IMR-90 (cell line): ENCODE measurements at regions of chr17 and their contacts with region 1.

Region 1: GRCh38 chr17:42760652-42761581 is at the start of gene RAMP2:
- DNase-seq: no peak
- ATAC-seq: peak; percentile 78
- H3K4me3 ChIP-seq: peak within 1 kb of the TSS; percentile 34
- H3K27ac ChIP-seq: no peak within 1 kb of the TSS
- H3K4me1 ChIP-seq: no peaks in the 10 kb centered on the region
- H3K27me3 ChIP-seq: peaks cover 48% of the 10 kb centered on the region
- CTCF ChIP-seq: no peak
- POLR2A ChIP-seq: no peak
- RAD21 ChIP-seq: no peak
- total RNA-seq, gene RAMP2: 0.18 and 0.28 TPM in 2 replicates

Region 2: GRCh38 chr17:42577532-42578281 is 183.2 kb before region 1 on chr17 and contains the start of gene PSMC3IP:
- CTCF ChIA-PET with region 1: interaction called, 6 read pairs
- POLR2A ChIA-PET with region 1: no interaction called
- dilution Hi-C with region 1: no loop called
- in situ Hi-C with region 1: no loop called
- intact Hi-C with region 1: loop called (anchors 5 kb)
- DNase-seq: peak; percentile 92
- ATAC-seq: peak; percentile 94
- H3K4me3 ChIP-seq: peak within 1 kb of the TSS; percentile 81
- H3K27ac ChIP-seq: peak within 1 kb of the TSS; percentile 96
- H3K4me1 ChIP-seq: peaks cover 5% of the 10 kb centered on the region
- H3K27me3 ChIP-seq: no peaks in the 10 kb centered on the region
- CTCF ChIP-seq: peak; percentile 56
- POLR2A ChIP-seq: no peak; the same call in 1 of the 2 replicates
- RAD21 ChIP-seq: 0 out of 2 replicates have a peak, but pooled peaks have one; percentile 24
- total RNA-seq, gene PSMC3IP: 5.6 and 8.9 TPM in 2 replicates

Region 3: DNA sequence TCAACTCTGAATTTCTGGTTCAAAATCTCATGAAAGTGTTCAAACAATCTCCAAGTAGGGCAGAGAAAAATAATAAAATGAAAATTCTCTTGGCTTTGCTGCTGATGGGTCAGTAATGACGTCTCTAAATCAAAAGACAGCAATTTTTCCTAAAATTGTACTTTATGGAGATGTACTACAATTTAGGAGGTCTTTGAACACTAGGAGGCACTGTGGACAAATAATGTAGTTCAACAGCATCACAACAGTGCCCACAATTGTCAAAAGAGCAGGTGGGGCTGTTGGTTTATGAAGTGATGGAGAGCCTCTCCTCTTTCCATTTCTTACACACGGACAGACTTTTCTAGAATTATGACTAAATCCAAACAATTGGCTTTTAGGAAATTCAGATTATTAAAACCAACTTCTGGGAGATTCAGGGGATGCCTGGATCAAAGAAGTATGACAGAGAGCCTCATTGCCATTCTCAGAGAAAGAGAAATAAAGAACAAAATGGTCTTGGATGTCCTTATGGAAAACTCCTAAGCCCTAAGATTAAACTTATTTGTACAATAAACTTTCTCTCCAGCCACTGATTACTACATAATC is 39.8 kb before region 1 on chr17:
- CTCF ChIA-PET with region 1: interaction called, 4 read pairs
- POLR2A ChIA-PET with region 1: no interaction called
- dilution Hi-C with region 1: no loop called
- in situ Hi-C with region 1: no loop called
- intact Hi-C with region 1: loop called (anchors 1 kb)
- DNase-seq: peak; percentile 71
- ATAC-seq: peak; percentile 90
- H3K4me3 ChIP-seq: no peak overlapping the region
- H3K27ac ChIP-seq: no peak overlapping the region
- H3K4me1 ChIP-seq: no peaks in the 10 kb centered on the region
- H3K27me3 ChIP-seq: no peaks in the 10 kb centered on the region
- CTCF ChIP-seq: peak; percentile 84
- POLR2A ChIP-seq: no peak
- RAD21 ChIP-seq: peak; percentile 69

Region 4: GRCh38 chr17:42748621-42749430 is 12.1 kb before region 1 on chr17:
- CTCF ChIA-PET with region 1: interaction called, 12 read pairs
- POLR2A ChIA-PET with region 1: no interaction called
- dilution Hi-C with region 1: no loop called
- in situ Hi-C with region 1: no loop called
- intact Hi-C with region 1: no loop called
- DNase-seq: no peak
- ATAC-seq: no peak
- H3K4me3 ChIP-seq: no peak overlapping the region
- H3K27ac ChIP-seq: no peak overlapping the region
- H3K4me1 ChIP-seq: peaks cover 5% of the 10 kb centered on the region; the same call in 1 of the 2 replicates
- H3K27me3 ChIP-seq: peaks cover 27% of the 10 kb centered on the region
- CTCF ChIP-seq: no peak
- POLR2A ChIP-seq: no peak
- RAD21 ChIP-seq: no peak

Region 5: GRCh38 chr17:42819944-42820535 is 59.1 kb after region 1 on chr17:
- CTCF ChIA-PET with region 1: no interaction called
- POLR2A ChIA-PET with region 1: no interaction called
- dilution Hi-C with region 1: no loop called
- in situ Hi-C with region 1: no loop called
- intact Hi-C with region 1: loop called (anchors 5 kb)
- DNase-seq: peak; percentile 37
- ATAC-seq: no peak
- H3K4me3 ChIP-seq: no peak overlapping the region
- H3K27ac ChIP-seq: no peak overlapping the region
- H3K4me1 ChIP-seq: no peaks in the 10 kb centered on the region; the same call in 1 of the 2 replicates
- H3K27me3 ChIP-seq: no peaks in the 10 kb centered on the region
- CTCF ChIP-seq: peak; percentile 67
- POLR2A ChIP-seq: no peak
- RAD21 ChIP-seq: peak; percentile 36